PC-9 (cell line): ENCODE measurements at regions of chr15 and their contacts with region 1.

Region 1: GRCh38 chr15:66946578-66947164 is 118.7 kb upstream of the SMAD3 start:
- DNase-seq: peak; percentile 44 to 72
- H3K4me3 ChIP-seq: no peak overlapping the region
- H3K27ac ChIP-seq: no peak overlapping the region
- H3K4me1 ChIP-seq: peaks cover 17% of the 10 kb centered on the region
- H3K27me3 ChIP-seq: no peaks in the 10 kb centered on the region
- CTCF ChIP-seq: peak; percentile 89

Region 2: GRCh38 chr15:67024314-67024997 is 77.8 kb after region 1 on chr15:
- CTCF ChIA-PET with region 1: no interaction called
- POLR2A ChIA-PET with region 1: no interaction called
- intact Hi-C with region 1: loop called (anchors 2 kb)
- DNase-seq: peak; percentile 75 to 83
- H3K4me3 ChIP-seq: no peak overlapping the region
- H3K27ac ChIP-seq: peak overlapping the region; percentile 82
- H3K4me1 ChIP-seq: peaks cover 65% of the 10 kb centered on the region
- H3K27me3 ChIP-seq: no peaks in the 10 kb centered on the region
- CTCF ChIP-seq: no peak

Region 3: DNA sequence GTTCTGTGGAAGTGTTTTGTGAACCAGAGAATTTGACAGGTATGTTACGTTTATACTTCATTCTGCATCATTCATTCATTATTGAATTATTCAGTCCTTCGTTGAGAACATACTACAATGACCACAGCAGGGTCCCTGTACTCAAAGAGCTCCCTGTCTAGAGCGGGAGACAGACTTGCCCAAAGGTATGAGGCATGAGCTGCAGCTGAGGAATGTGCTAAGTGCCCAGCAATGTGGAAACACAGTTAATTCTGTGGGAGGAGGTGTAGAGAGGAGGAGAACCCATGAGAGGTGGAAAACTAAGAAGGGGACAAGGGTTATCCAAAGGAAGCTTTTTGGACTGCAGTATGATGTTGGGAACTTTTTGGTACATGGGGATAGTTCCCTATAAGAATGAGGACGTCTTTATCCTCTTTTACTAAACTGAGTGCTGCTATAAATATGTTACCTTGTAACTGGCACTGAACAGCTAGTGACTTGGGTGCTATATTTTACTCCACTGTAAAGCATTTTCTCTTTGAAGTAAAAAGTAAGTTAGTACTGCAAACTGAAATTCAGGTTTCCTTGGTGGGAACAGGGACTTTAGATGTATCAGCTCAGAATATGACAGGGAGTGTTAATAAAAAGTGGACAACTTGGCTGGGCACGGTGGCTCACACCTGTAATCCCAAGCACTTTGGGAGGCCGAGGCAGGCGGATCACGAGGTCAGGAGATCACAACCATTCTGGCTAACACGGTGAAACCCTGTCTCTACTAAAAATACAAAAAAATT is 124.4 kb after region 1 on chr15:
- CTCF ChIA-PET with region 1: interaction called, 3 read pairs
- POLR2A ChIA-PET with region 1: interaction called, 10 read pairs
- intact Hi-C with region 1: no loop called
- DNase-seq: no peak
- H3K4me3 ChIP-seq: peak overlapping the region; percentile 0; the same call in 1 of the 2 replicates
- H3K27ac ChIP-seq: no peak overlapping the region
- H3K4me1 ChIP-seq: peaks cover 77% of the 10 kb centered on the region
- H3K27me3 ChIP-seq: no peaks in the 10 kb centered on the region
- CTCF ChIP-seq: no peak

Region 4: GRCh38 chr15:67199881-67200763 is 253.5 kb after region 1 on chr15:
- CTCF ChIA-PET with region 1: interaction called, 3 read pairs
- POLR2A ChIA-PET with region 1: interaction called, 7 read pairs
- intact Hi-C with region 1: loop called (anchors 5 kb)
- DNase-seq: no peak
- H3K4me3 ChIP-seq: no peak overlapping the region
- H3K27ac ChIP-seq: no peak overlapping the region
- H3K4me1 ChIP-seq: peaks cover 7% of the 10 kb centered on the region; the same call in 1 of the 2 replicates
- H3K27me3 ChIP-seq: no peaks in the 10 kb centered on the region
- CTCF ChIP-seq: no peak

Region 5: DNA sequence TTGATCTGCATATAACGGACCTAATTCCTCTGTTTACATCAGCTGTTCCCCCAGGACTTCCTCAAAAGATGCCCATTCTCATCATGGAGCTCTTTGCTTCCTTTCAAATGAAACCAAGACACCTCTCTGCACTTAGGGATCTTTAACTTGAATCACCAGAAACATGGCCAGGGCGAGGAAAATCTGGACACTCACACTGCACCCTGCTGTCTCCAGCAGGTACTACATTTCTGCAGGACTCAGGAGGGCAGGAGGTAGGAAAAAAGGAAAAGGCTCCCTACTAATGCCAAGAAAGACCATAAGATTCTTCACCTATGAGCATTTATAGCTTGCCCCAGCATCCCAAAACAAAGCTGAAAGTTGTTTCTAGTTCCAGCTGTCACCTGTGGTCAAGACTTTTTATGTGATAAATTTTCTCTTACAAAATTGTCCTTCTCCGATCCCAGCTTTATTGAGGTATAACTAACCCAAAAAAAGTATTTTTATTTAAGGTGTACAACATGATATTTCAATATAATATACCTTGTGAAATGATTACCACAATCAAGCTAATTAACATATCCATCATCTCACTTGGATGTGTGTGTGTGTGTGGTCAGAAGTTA is 486.9 kb after region 1 on chr15:
- CTCF ChIA-PET with region 1: no interaction called
- POLR2A ChIA-PET with region 1: no interaction called
- intact Hi-C with region 1: loop called (anchors 5 kb)
- DNase-seq: peak in 1 of 2 experiments; percentile 29
- H3K4me3 ChIP-seq: no peak overlapping the region
- H3K27ac ChIP-seq: no peak overlapping the region
- H3K4me1 ChIP-seq: no peaks in the 10 kb centered on the region; the same call in 1 of the 2 replicates
- H3K27me3 ChIP-seq: no peaks in the 10 kb centered on the region
- CTCF ChIP-seq: peak; percentile 76